ENCODE measurements at regions of chr9 and their contacts with region 1.

Region 1: GRCh38 chr9:87581513-87581912 is 83.8 kb downstream of the DAPK1 start:
- DNase-seq: peak in 1 of 3 donors; percentile 47
- H3K4me3 ChIP-seq: no peak overlapping the region
- H3K27ac ChIP-seq: peak overlapping the region in 1 of 2 experiments; percentile 12
- H3K4me1 ChIP-seq: peaks cover 3 to 39% (median 17%) of the 10 kb centered on the region in 4 experiments
- H3K27me3 ChIP-seq: no peaks in the 10 kb centered on the region

Region 2: GRCh38 chr9:86521977-86522376 is 1059.5 kb before region 1 on chr9:
- CTCF ChIA-PET with region 1: no interaction called
- POLR2A ChIA-PET with region 1: no interaction called
- DNase-seq: no peak
- H3K4me3 ChIP-seq: no peak overlapping the region
- H3K27ac ChIP-seq: no peak overlapping the region
- H3K4me1 ChIP-seq: no peaks in the 10 kb centered on the region
- H3K27me3 ChIP-seq: peaks cover 0 to 11% (median 0%) of the 10 kb centered on the region in 5 experiments

Region 3: DNA sequence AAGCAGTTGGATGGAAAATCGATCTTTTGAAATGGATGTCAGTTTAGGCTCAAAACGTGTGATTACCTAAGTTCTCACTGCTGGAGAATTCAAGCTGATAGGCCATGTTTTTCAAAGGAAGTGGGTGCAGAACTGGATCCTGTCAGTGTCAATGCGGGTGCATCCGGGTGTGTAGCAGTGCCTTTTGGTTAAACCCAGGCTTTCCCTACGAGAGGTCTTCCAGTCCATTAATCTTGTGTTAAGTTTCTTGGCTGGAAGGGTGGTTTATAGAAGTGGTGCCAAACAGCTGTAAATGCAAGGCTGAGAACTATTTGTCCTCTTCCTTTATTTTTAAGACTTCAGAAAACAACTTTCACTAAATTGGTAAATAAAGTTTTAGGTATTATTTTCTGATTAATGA is 12.0 kb before region 1 on chr9:
- CTCF ChIA-PET with region 1: interaction called, 26 read pairs
- POLR2A ChIA-PET with region 1: no interaction called
- DNase-seq: peak in 2 of 3 donors; percentile 75 to 89
- H3K4me3 ChIP-seq: peak overlapping the region in 1 of 7 experiments; percentile 43
- H3K27ac ChIP-seq: peak overlapping the region in 1 of 2 experiments; percentile 56
- H3K4me1 ChIP-seq: peaks cover 0 to 30% (median 19%) of the 10 kb centered on the region in 4 experiments
- H3K27me3 ChIP-seq: no peaks in the 10 kb centered on the region

Region 4: DNA sequence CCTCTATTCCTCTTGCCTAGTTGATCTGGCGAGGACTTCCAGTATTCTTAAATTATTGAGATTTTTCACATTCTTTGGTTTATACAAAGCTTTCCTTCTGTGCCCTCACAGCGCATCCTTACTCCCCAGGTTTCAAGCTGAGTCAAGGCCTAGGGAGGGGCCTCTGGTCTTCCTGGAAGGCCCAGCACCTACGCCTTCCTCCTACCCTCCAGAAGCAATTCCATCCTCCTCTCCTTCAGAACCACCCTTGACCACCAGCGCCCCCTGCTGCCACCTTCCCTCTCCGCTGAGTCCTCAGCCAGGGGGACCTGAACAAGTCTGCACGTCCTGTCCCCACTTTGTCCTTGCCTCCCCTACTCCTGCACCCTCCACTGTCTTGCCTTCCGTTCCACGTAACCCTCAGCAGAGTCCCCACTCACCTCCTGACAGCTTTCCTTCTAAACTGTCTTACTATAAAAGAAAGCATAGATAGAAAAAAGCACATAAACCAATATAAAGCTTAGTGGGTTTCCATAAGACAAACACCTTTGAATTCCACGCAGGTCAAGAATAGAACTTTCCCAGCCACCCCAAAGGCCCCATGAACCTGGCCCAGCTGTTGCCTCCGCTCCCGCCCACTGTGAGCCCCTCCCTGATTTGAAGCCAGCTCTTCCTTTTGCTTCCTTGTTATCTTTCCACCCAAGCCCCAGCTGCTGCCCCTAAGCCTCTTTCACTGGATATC is 81.5 kb after region 1 on chr9:
- CTCF ChIA-PET with region 1: no interaction called
- POLR2A ChIA-PET with region 1: no interaction called
- DNase-seq: peak; percentile 55 to 62 (median 59)
- H3K4me3 ChIP-seq: no peak overlapping the region
- H3K27ac ChIP-seq: no peak overlapping the region
- H3K4me1 ChIP-seq: no peaks in the 10 kb centered on the region
- H3K27me3 ChIP-seq: no peaks in the 10 kb centered on the region

Measured in common myeloid progenitor, CD34-positive (primary cell).